Activated CD4-positive, alpha-beta T cell treated with anti-CD3 and anti-CD28 coated beads, Interleukin-2, amount 10 ng/mL, durations not matched to agents 24 days and 14 days (primary cell): ENCODE measurements at regions of chr15 and their contacts with region 1.

Region 1: GRCh38 chr15:96330450-96331145 is at the start of gene NR2F2:
- DNase-seq: peak; percentile 84
- H3K4me3 Mint-ChIP-seq: peak within 1 kb of the TSS; percentile 89
- H3K27ac Mint-ChIP-seq: peak within 1 kb of the TSS; percentile 80
- H3K4me1 Mint-ChIP-seq: peaks cover 4% of the 10 kb centered on the region
- H3K27me3 Mint-ChIP-seq: peaks cover 78% of the 10 kb centered on the region
- total RNA-seq, gene NR2F2: not detected in 2 replicates

Region 2: GRCh38 chr15:95690631-95691340 is 639.8 kb before region 1 on chr15:
- intact Hi-C with region 1: no loop called
- DNase-seq: no peak
- H3K4me3 Mint-ChIP-seq: no peak overlapping the region
- H3K27ac Mint-ChIP-seq: no peak overlapping the region
- H3K4me1 Mint-ChIP-seq: peaks cover 2% of the 10 kb centered on the region
- H3K27me3 Mint-ChIP-seq: no peaks in the 10 kb centered on the region

Region 3: GRCh38 chr15:96356494-96357455 is 26.2 kb after region 1 on chr15:
- intact Hi-C with region 1: loop called (anchors 2 kb)
- DNase-seq: peak; percentile 94
- H3K4me3 Mint-ChIP-seq: peak overlapping the region; percentile 87
- H3K27ac Mint-ChIP-seq: peak overlapping the region; percentile 67
- H3K4me1 Mint-ChIP-seq: peaks cover 12% of the 10 kb centered on the region
- H3K27me3 Mint-ChIP-seq: peaks cover 66% of the 10 kb centered on the region

Region 4: GRCh38 chr15:96367311-96368200 is 37.0 kb after region 1 on chr15:
- intact Hi-C with region 1: no loop called
- DNase-seq: no peak
- H3K4me3 Mint-ChIP-seq: no peak overlapping the region
- H3K27ac Mint-ChIP-seq: no peak overlapping the region
- H3K4me1 Mint-ChIP-seq: no peaks in the 10 kb centered on the region
- H3K27me3 Mint-ChIP-seq: peaks cover 66% of the 10 kb centered on the region

Region 5: GRCh38 chr15:97140216-97140615 is 809.6 kb after region 1 on chr15:
- intact Hi-C with region 1: no loop called
- DNase-seq: no peak
- H3K4me3 Mint-ChIP-seq: no peak overlapping the region
- H3K27ac Mint-ChIP-seq: no peak overlapping the region
- H3K4me1 Mint-ChIP-seq: no peaks in the 10 kb centered on the region
- H3K27me3 Mint-ChIP-seq: no peaks in the 10 kb centered on the region